H1 (cell line): ENCODE measurements at regions of chr9 and their contacts with region 1.

Region 1: GRCh38 chr9:36873247-36873875 is 160.7 kb downstream of the PAX5 start:
- DNase-seq: peak in 1 of 2 experiments; percentile 89
- H3K4me3 ChIP-seq: no peak overlapping the region
- H3K27ac ChIP-seq: no peak overlapping the region
- H3K4me1 ChIP-seq: no peaks in the 10 kb centered on the region; a peak in 1 of 7 replicates
- H3K27me3 ChIP-seq: peaks cover 0 to 2% (median 0%) of the 10 kb centered on the region in 4 experiments; a peak in 1 of 7 replicates
- CTCF ChIP-seq: peak; percentile 93 to 98 (median 95)
- EP300 ChIP-seq: no peak
- POLR2A ChIP-seq: no peak
- RAD21 ChIP-seq: peak; percentile 94 to 98

Region 2: GRCh38 chr9:36832164-36832795 is 41.1 kb before region 1 on chr9:
- CTCF ChIA-PET with region 1: interaction called, 12 read pairs
- POLR2A ChIA-PET with region 1: no interaction called
- DNase-seq: no peak
- H3K4me3 ChIP-seq: no peak overlapping the region
- H3K27ac ChIP-seq: no peak overlapping the region
- H3K4me1 ChIP-seq: peaks cover 0 to 12% (median under 1%) of the 10 kb centered on the region in 4 experiments; a peak in 2 of 7 replicates
- H3K27me3 ChIP-seq: no peaks in the 10 kb centered on the region
- CTCF ChIP-seq: no peak
- EP300 ChIP-seq: no peak
- POLR2A ChIP-seq: no peak
- RAD21 ChIP-seq: no peak

Region 3: GRCh38 chr9:36862206-36863145 is 10.9 kb before region 1 on chr9:
- CTCF ChIA-PET with region 1: interaction called, 82 read pairs
- POLR2A ChIA-PET with region 1: no interaction called
- DNase-seq: peak in 1 of 2 experiments; percentile 75
- H3K4me3 ChIP-seq: no peak overlapping the region
- H3K27ac ChIP-seq: no peak overlapping the region
- H3K4me1 ChIP-seq: peaks cover 0 to 17% (median 7%) of the 10 kb centered on the region in 4 experiments; a peak in 6 of 7 replicates
- H3K27me3 ChIP-seq: peaks cover 0 to 28% (median 21%) of the 10 kb centered on the region in 4 experiments; a peak in 5 of 7 replicates
- CTCF ChIP-seq: peak; percentile 78 to 90 (median 82)
- EP300 ChIP-seq: no peak
- POLR2A ChIP-seq: no peak
- RAD21 ChIP-seq: peak; percentile 49 to 66

Region 4: DNA sequence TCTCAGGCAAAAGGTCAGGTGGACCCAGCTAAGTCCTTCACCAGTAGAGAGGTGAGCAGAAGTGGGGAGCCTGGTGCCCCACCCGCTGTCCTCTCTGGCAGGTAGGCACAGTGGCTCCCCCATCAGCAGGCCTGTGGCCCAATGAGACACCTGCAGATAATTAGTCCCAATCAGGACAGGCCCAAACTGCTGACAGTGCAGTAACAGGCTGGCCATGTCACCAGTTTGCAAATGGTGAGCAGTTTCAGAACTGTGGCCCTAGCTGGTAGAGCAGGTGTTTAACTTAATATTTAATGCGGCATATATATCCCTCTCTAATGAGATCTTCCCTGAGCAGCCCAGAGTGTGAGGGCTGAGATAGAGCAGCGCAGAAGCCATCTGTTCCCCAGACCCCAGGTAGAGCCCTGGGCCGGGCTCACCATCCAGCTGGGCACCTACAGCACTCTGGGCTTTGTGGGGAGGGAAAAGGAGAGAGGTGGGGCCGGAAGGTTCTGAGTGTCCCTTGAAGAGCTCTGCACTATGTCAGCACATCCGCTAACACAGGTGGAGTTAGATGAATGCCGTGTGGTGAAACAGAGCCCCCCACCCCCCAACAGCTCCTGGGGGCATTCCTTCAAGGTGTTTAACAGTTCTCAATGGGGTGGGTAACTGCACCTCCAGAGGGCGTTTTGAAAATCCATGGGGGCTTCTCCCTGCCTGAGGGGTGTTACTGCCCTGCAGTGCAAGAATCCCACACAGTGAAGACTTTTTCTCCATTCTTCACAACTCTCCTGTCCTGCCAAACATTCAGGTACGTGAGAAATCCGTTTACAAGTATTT is 40.2 kb after region 1 on chr9:
- CTCF ChIA-PET with region 1: interaction called, 74 read pairs
- POLR2A ChIA-PET with region 1: no interaction called
- DNase-seq: no peak
- H3K4me3 ChIP-seq: no peak overlapping the region
- H3K27ac ChIP-seq: no peak overlapping the region
- H3K4me1 ChIP-seq: peaks cover 3 to 7% (median 4%) of the 10 kb centered on the region in 4 experiments
- H3K27me3 ChIP-seq: no peaks in the 10 kb centered on the region
- CTCF ChIP-seq: peak; percentile 38 to 54 (median 41)
- EP300 ChIP-seq: no peak
- POLR2A ChIP-seq: no peak
- RAD21 ChIP-seq: peak in 1 of 2 experiments; percentile 23; a peak in 1 of 4 replicates

Region 5: GRCh38 chr9:36961561-36962298 is 88.4 kb after region 1 on chr9:
- CTCF ChIA-PET with region 1: interaction called, 38 read pairs
- POLR2A ChIA-PET with region 1: no interaction called
- DNase-seq: peak in 1 of 2 experiments; percentile 43
- H3K4me3 ChIP-seq: no peak overlapping the region
- H3K27ac ChIP-seq: no peak overlapping the region
- H3K4me1 ChIP-seq: no peaks in the 10 kb centered on the region
- H3K27me3 ChIP-seq: no peaks in the 10 kb centered on the region; a peak in 1 of 7 replicates
- CTCF ChIP-seq: no peak
- EP300 ChIP-seq: no peak
- POLR2A ChIP-seq: no peak
- RAD21 ChIP-seq: no peak